Dorsolateral prefrontal cortex (tissue), 120 donors: ENCODE measurements at regions of chr14 and their contacts with region 1.

Region 1: DNA sequence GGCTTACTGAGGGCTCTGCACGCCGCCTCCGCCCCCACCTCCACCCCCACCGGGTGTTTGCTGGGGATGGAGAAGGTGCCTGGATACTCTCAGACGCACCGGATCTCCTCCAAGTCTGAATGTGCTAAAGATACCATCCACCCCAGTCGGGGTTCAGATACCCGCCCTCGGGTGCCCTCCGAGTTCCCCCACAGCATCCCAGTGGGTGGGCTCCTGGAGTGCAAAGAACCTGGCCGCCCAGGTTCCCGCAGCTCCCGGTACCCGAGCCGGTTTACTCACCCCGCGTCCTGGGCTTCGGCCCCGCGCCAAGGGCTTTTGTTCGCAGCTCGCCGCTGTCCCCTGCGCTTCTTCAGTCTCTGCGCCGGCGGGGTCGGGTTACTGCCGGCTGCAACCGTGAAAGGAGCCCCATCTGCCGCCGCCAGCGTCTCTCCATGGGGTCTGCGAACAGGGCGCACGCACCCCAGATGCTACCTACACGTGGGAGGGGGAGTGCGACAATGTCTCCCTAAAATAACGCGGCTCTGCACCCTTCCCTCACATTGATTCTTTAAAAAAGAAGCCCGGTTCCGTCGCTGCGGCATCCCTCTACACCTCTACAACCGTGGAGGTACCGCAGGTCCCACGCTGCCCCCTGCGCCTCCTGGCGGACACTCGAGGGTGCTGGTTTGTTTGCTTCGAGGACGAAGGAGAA is at the start of gene CCDC177:
- DNase-seq: peak in 9 of 10 donors; percentile 45 to 86 (median 69)
- H3K4me3 ChIP-seq: peak within 1 kb of the TSS; percentile 30 to 72 (median 60)
- H3K27ac ChIP-seq: peak within 1 kb of the TSS in 53 of 59 donors; percentile 26 to 92 (median 74)
- H3K27me3 ChIP-seq: peaks cover 0 to 30% (median 2%) of the 10 kb centered on the region in 45 donors
- CTCF ChIP-seq: peak; percentile 64 to 86 (median 78)
- total RNA-seq, gene CCDC177: 2.8 to 14.6 (median 10.0) TPM

Region 2: GRCh38 chr14:69242311-69243224 is 331.8 kb before region 1 on chr14:
- intact Hi-C with region 1: loop called in 1 of 2 experiments (anchors 10 kb)
- DNase-seq: peak in 3 of 10 donors; percentile 47 to 77 (median 60)
- H3K4me3 ChIP-seq: peak overlapping the region in 1 of 59 donors; percentile 28
- H3K27ac ChIP-seq: peak overlapping the region in 5 of 59 donors; percentile 0 to 24 (median 8)
- H3K27me3 ChIP-seq: no peaks in the 10 kb centered on the region
- CTCF ChIP-seq: peak; percentile 64 to 95 (median 86)

Region 3: DNA sequence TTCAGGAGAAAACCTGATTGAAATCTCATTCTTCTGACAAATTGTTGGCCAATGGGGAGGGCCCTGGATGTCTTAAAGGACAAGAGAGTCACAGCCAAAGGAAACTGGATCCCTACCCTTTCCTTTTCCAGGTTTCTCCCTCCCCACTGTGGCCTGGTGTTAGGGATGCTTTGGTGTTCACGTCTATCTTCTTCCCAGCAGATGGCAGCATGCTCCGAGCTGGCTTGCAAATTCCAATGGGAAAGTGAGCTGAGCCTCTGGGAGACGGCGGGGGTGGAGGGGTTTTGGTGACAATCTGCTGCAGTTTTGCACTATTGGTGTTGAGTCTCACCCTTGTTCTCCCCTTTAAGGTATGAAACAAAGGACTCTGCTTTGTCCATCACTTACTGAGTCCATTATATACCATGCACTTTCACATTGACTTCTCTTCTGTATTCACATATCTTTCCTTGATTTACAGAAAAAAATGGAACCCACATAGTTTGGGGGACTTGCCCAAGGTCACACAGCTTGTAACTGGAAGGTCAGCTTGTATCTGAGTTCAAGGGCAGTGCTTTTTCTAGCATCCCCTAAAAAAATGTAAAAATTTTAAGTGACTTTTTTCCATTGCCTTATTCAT is 39.1 kb before region 1 on chr14:
- intact Hi-C with region 1: loop called in 1 of 2 experiments (anchors 2 kb)
- DNase-seq: peak; percentile 34 to 79 (median 70)
- H3K4me3 ChIP-seq: no peak overlapping the region
- H3K27ac ChIP-seq: no peak overlapping the region
- H3K27me3 ChIP-seq: no peaks in the 10 kb centered on the region
- CTCF ChIP-seq: peak; percentile 19 to 82 (median 64)

Region 4: DNA sequence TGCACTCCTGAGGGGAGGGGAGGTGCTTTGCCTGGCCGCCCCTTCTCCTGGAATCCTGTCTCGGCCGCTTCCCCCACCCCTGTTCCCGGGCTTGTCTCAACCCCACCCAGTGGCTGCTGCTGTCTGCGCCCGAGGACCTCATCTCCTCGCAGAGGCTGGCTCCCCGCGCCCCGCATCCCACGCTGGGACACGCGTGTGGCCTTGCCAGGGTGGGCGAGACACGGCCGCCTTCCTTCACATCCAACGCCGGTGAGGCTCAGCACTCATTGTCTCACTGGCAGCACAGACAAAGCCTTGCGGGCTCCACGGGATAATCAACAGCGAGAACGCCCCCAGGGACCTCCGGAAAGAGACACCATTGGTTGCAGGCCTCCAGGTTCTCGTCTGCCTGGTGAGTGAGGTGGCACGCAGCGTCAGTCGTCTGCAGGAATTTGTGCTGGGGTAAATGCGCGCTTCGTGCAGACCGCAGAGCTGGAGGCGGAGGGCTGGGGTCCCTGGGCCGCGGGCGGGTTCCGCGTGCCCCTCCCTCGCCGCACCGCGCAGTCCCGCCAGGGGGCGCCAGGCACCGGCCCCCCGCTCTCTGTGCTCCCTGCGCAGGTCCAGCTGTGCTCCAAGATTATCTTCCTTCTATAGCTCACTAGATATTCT is 26.6 kb before region 1 on chr14:
- intact Hi-C with region 1: loop called in 1 of 2 experiments (anchors 1 kb)
- DNase-seq: peak in 8 of 10 donors; percentile 45 to 71 (median 62)
- H3K4me3 ChIP-seq: peak overlapping the region in 58 of 59 donors; percentile 10 to 65 (median 46)
- H3K27ac ChIP-seq: peak overlapping the region in 55 of 59 donors; percentile 9 to 88 (median 71)
- H3K27me3 ChIP-seq: peaks cover 0 to 20% (median 0%) of the 10 kb centered on the region in 45 donors
- CTCF ChIP-seq: peak; percentile 41 to 77 (median 64)